ENCODE measurements at regions of chr2 and their contacts with region 1.

Region 1: GRCh38 chr2:230793572-230794359 is 71.0 kb upstream of the ITM2C start:
- DNase-seq: peak; percentile 69
- H3K4me3 Mint-ChIP-seq: peak overlapping the region; percentile 60
- H3K27ac Mint-ChIP-seq: peak overlapping the region; percentile 94
- H3K4me1 Mint-ChIP-seq: peaks cover 50% of the 10 kb centered on the region
- H3K27me3 Mint-ChIP-seq: no peaks in the 10 kb centered on the region

Region 2: DNA sequence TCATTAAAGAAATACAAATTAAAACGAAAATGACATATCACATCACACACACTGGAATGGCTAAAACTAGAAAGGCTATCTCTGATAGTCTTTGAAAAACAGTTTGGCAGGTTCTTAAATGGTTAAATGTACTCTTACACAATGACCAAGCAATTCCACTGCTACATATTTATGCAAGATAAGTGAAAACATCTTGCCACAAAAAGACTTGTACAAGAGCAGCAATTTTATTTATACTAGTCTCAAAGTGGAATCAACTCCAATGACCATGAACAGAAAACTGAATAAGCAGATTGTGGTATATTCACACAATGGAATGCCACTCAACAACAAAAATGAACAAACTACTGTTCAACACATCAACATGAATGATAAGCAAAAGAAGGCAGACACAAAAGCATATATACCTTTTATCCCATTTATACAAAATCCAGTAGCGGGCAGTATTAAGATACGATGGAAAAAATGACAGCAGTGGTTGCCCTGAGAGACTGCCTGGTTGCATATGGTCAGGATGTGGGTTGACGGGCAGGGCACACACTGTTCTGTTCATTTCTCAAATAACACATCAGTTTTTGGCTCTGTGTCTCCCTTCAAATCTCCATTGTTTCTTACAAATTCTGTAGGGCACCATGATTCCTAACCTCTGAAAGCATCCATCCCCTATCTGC is 352.4 kb before region 1 on chr2:
- intact Hi-C with region 1: loop called (anchors 1 kb)
- DNase-seq: peak; percentile 48
- H3K4me3 Mint-ChIP-seq: peak overlapping the region; percentile 46
- H3K27ac Mint-ChIP-seq: peak overlapping the region; percentile 85
- H3K4me1 Mint-ChIP-seq: peaks cover 50% of the 10 kb centered on the region
- H3K27me3 Mint-ChIP-seq: no peaks in the 10 kb centered on the region

Region 3: DNA sequence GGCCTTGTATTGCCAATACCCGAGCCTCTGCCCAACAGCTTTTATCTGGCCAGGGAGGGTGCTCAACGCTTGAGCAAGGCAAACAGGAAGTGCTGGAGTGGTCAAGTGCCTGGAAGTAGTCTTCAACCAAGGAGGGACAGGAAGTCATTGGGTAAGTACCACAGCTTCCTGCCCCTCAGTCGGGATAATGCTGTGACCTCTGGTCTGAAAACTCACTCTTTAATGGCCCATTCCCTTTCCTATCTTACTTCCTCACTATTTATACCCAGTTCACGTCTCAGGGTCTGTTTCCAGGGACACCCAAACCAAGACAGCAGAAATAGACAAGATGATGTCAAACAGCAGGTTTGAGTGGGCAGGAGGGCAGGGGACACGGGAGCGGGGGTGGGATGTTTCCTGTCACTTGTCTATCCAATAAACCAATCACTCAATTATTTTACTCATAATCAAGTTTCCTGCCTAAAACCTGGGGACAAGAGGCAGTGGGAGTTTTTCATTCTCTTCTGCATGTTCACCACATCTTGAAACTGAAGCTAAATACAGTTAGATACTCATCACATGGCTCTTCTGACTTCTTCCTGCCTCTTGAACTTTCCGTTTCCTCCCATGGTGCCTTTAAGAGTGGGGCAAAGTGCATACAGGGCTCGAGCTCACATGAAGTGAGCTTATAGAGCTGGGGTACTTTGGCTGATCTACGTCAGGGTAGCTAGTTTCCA is 150.0 kb before region 1 on chr2:
- intact Hi-C with region 1: loop called (anchors 1 kb)
- DNase-seq: peak; percentile 51
- H3K4me3 Mint-ChIP-seq: peak overlapping the region; percentile 40
- H3K27ac Mint-ChIP-seq: peak overlapping the region; percentile 98
- H3K4me1 Mint-ChIP-seq: peaks cover 24% of the 10 kb centered on the region
- H3K27me3 Mint-ChIP-seq: no peaks in the 10 kb centered on the region

Region 4: DNA sequence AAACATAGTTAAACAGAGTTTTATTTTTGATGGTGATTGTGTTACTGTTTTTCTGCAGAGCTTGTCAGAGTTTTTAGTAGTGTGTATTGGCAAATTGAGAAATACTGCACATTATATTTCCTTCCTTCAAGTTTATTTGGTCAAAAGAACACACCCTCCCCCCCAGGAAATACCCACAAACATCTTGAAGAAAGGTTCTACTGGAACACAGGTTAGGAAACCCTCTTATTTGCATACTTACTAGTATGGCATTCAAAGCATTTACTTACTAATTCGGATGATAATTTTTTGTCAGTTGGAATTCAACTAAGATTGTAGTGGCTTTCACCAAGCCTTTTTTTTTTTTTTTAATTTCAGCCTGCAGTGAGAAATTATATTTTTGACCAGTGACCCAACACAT is 72.1 kb before region 1 on chr2:
- intact Hi-C with region 1: loop called (anchors 2 kb)
- DNase-seq: no peak
- H3K4me3 Mint-ChIP-seq: peak overlapping the region; percentile 34
- H3K27ac Mint-ChIP-seq: peak overlapping the region; percentile 82
- H3K4me1 Mint-ChIP-seq: peaks cover 72% of the 10 kb centered on the region
- H3K27me3 Mint-ChIP-seq: no peaks in the 10 kb centered on the region

Region 5: DNA sequence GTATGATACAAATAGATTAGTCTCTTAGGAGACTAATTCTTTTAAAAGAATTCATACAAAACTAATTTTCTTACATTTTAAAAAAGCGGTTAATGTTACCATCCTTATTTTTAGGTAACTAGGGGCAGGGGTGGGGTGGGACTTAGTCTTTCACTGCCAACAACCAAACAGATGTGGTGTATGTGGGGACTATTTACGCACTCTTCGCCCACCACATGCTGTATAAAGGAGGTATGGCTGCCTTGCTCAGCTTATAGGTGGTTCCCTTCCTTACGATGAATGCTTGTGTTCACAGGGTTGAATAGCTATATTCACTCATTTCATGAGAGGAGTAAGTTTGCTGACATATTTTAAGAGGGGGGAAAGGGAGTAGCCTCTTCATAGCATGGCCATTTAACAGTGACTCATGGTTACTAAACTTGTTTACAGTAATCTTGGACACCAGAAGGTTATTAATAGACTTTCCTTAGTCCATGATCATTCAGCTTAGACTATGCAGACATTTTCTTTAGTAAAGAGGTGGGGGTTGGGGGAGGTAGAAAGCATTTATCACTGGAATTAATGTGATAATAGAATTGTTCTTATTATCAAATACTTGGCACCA is 19.3 kb before region 1 on chr2:
- intact Hi-C with region 1: loop called (anchors 1 kb)
- DNase-seq: no peak
- H3K4me3 Mint-ChIP-seq: no peak overlapping the region
- H3K27ac Mint-ChIP-seq: no peak overlapping the region
- H3K4me1 Mint-ChIP-seq: peaks cover 80% of the 10 kb centered on the region
- H3K27me3 Mint-ChIP-seq: no peaks in the 10 kb centered on the region